ENCODE measurements at regions of chr12 and their contacts with region 1.

Region 1: DNA sequence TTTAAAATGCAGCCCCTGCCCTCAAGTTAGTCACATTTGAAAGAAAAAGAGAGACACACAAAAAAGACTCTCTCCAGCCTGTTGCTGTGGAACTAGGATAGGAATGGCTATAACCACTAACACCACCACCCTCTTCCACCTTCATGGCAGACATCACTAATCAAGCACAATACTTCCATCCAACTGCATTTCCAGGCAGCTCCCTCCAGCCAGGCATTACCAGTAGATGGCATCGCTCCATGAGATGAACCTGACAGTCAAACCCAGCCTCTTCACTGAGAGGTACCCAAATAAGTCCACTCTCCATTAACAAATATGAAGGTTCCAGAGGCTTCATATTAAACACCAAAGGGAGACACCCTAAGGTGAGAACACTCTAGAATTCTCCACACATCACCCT is 24.4 kb downstream of the SLC8B1 start:
- DNase-seq: no peak
- ATAC-seq: no peak
- H3K4me3 ChIP-seq: no peak overlapping the region
- H3K27ac ChIP-seq: no peak overlapping the region
- H3K4me1 ChIP-seq: no peaks in the 10 kb centered on the region
- H3K27me3 ChIP-seq: no peaks in the 10 kb centered on the region
- CTCF ChIP-seq: no peak
- EP300 ChIP-seq: no peak
- POLR2A ChIP-seq: no peak
- RAD21 ChIP-seq: no peak

Region 2: GRCh38 chr12:113325916-113326315 is 15.4 kb after region 1 on chr12:
- CTCF ChIA-PET with region 1: interaction called, 13 read pairs
- POLR2A ChIA-PET with region 1: interaction called, 6 read pairs
- RAD21 ChIA-PET with region 1: no interaction called
- SMC1A ChIA-PET with region 1: interaction called, 5 read pairs
- in situ Hi-C with region 1: no loop called
- intact Hi-C with region 1: no loop called
- DNase-seq: no peak
- ATAC-seq: no peak
- H3K4me3 ChIP-seq: no peak overlapping the region
- H3K27ac ChIP-seq: no peak overlapping the region
- H3K4me1 ChIP-seq: peaks cover 16% of the 10 kb centered on the region
- H3K27me3 ChIP-seq: no peaks in the 10 kb centered on the region
- CTCF ChIP-seq: no peak
- EP300 ChIP-seq: no peak
- POLR2A ChIP-seq: no peak
- RAD21 ChIP-seq: no peak

Region 3: GRCh38 chr12:113422030-113422885 is 111.8 kb after region 1 on chr12 and contains the start of gene SDSL:
- CTCF ChIA-PET with region 1: interaction called, 9 read pairs
- POLR2A ChIA-PET with region 1: no interaction called
- RAD21 ChIA-PET with region 1: no interaction called
- SMC1A ChIA-PET with region 1: interaction called, 8 read pairs
- in situ Hi-C with region 1: no loop called
- intact Hi-C with region 1: loop called (anchors 1 kb)
- DNase-seq: peak; percentile 76
- ATAC-seq: peak; percentile 95
- H3K4me3 ChIP-seq: peak within 1 kb of the TSS; percentile 63
- H3K27ac ChIP-seq: peak within 1 kb of the TSS; percentile 23; the same call in 1 of the 2 replicates
- H3K4me1 ChIP-seq: peaks cover 10% of the 10 kb centered on the region
- H3K27me3 ChIP-seq: no peaks in the 10 kb centered on the region
- CTCF ChIP-seq: no peak
- EP300 ChIP-seq: peak in 1 of 2 experiments; percentile 28; a peak in 1 of 4 replicates
- POLR2A ChIP-seq: no peak; the same call in 1 of the 2 replicates
- RAD21 ChIP-seq: no peak
- polyA plus RNA-seq, gene SDSL: 0.18 to 0.49 TPM